BJ (cell line): ENCODE measurements at regions of chr5 and their contacts with region 1.

Region 1: DNA sequence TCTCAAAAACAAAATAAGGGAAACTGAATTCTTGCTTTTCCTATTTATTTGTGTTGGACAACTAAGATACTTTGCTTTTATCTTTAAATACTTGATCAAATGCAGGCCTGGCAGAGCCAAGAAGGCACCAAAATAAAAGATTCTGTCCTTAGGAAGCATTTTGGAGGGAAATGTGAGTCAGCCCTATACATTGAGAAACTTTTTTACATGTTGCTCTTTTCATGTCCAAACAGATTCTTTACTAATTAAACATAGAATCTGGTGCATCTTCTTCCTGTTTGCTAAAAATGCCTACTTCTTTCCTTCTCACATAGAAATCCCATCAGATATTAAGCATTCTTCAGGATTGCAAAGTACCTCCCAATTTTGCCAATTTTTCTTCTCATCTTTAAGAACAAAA is 1160.4 kb downstream of the EFNA5 start:
- DNase-seq: no peak
- H3K4me3 ChIP-seq: no peak overlapping the region
- H3K27me3 ChIP-seq: no peaks in the 10 kb centered on the region
- CTCF ChIP-seq: no peak

Region 2: GRCh38 chr5:106254784-106255183 is 255.5 kb before region 1 on chr5:
- CTCF ChIA-PET with region 1: no interaction called
- POLR2A ChIA-PET with region 1: interaction called, 24 read pairs
- DNase-seq: no peak
- H3K4me3 ChIP-seq: no peak overlapping the region
- H3K27me3 ChIP-seq: no peaks in the 10 kb centered on the region
- CTCF ChIP-seq: no peak

Region 3: GRCh38 chr5:106493910-106494309 is 16.4 kb before region 1 on chr5:
- CTCF ChIA-PET with region 1: no interaction called
- POLR2A ChIA-PET with region 1: no interaction called
- DNase-seq: no peak
- H3K4me3 ChIP-seq: no peak overlapping the region
- H3K27me3 ChIP-seq: no peaks in the 10 kb centered on the region
- CTCF ChIP-seq: no peak